ENCODE measurements at regions of chr9 and their contacts with region 1.

Region 1: GRCh38 chr9:17900606-17901005 is 321.7 kb downstream of the SH3GL2 start:
- DNase-seq: no peak
- ATAC-seq: no peak
- H3K4me3 ChIP-seq: no peak overlapping the region
- H3K27ac ChIP-seq: no peak overlapping the region
- H3K4me1 ChIP-seq: no peaks in the 10 kb centered on the region
- H3K27me3 ChIP-seq: peaks cover 0 to 3% of the 10 kb centered on the region in 2 experiments
- CTCF ChIP-seq: no peak
- EP300 ChIP-seq: no peak
- POLR2A ChIP-seq: no peak
- RAD21 ChIP-seq: no peak

Region 2: DNA sequence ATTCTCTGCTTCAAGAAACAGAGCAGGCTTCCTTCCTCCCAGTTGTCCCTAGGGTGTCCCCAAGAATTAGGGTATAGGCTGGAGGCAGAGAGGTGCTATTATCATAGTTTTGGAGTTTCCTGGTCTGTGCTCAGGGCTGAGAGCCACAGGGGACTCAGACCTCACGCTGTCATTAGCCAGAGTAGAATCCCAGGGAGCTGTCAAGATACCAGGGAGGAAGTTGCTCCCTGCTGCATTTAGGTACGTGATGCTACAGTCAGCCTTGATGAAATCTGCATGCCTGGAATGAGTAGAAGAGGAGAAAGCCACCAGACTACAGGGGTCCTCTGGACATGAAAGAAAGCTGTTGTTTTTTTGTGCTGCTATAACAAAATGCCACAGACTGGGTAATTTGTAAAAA is 48.5 kb before region 1 on chr9:
- CTCF ChIA-PET with region 1: no interaction called
- POLR2A ChIA-PET with region 1: no interaction called
- RAD21 ChIA-PET with region 1: no interaction called
- SMC1A ChIA-PET with region 1: no interaction called
- in situ Hi-C with region 1: loop called (anchors 10 kb)
- intact Hi-C with region 1: loop called (anchors 5 kb)
- DNase-seq: no peak
- ATAC-seq: no peak
- H3K4me3 ChIP-seq: no peak overlapping the region
- H3K27ac ChIP-seq: no peak overlapping the region
- H3K4me1 ChIP-seq: no peaks in the 10 kb centered on the region
- H3K27me3 ChIP-seq: peaks cover 0 to 2% of the 10 kb centered on the region in 2 experiments; a peak in 1 of 4 replicates
- CTCF ChIP-seq: no peak
- EP300 ChIP-seq: no peak
- POLR2A ChIP-seq: no peak
- RAD21 ChIP-seq: no peak